Activated CD4-positive, alpha-beta memory T cell treated with anti-CD3 and anti-CD28 coated beads, Interleukin-2, amount 10 ng/mL, durations not matched to agents 7 days and 5 days (primary cell): ENCODE measurements at regions of chr4 and their contacts with region 1.

Region 1: GRCh38 chr4:25312496-25313200 is at the start of gene ZCCHC4:
- DNase-seq: peak; percentile 91
- H3K4me3 Mint-ChIP-seq: peak within 1 kb of the TSS; percentile 99
- H3K27ac Mint-ChIP-seq: peak within 1 kb of the TSS; percentile 88
- H3K4me1 Mint-ChIP-seq: peaks cover 35% of the 10 kb centered on the region
- H3K27me3 Mint-ChIP-seq: peaks cover 2% of the 10 kb centered on the region
- total RNA-seq, gene ZCCHC4: 8.4 TPM

Region 2: DNA sequence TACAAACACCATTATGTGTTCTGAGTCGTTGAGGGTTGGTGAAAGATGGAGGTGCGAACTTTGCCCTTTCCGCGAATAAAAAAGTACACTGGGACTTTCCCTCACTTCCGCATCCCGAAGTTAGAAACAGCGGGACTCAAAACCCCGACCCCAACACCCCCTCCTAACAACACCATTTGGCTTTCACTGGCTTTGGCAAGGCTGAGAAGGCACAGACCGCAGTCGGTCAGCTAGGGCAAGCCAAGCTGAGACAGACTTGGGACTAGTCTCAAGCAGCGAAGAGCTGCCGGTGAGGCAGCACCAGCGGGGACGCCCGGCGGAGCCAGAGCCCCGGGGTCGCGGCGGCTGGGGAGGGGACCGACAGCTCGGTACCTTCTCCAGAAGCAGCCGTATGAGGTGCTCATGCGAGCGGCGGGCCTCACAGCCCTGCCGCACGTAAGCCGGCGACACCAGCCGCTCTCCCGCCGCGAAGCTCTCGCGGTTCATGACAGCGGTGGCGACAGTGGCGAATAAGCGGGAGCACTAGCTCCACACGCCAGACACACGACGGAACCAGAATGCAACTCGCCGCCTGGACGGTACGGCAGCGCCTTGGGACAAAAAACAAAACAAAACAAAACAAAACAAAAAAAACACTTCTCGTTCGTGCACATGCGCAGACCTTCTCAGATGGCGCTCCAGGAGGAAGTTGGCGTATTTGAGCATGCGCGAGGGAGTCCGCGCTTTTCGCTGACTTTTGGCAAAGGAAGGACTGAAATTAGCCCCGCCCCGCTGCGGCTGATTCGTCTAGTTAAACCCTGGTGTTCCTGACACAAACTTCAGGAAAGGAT is 152.5 kb before region 1 on chr4 and contains the start of gene SEPSECS:
- CTCF ChIA-PET with region 1: interaction called, 48 read pairs
- POLR2A ChIA-PET with region 1: interaction called, 44 read pairs
- DNase-seq: peak; percentile 95
- H3K4me3 Mint-ChIP-seq: peak within 1 kb of the TSS; percentile 93
- H3K27ac Mint-ChIP-seq: peak within 1 kb of the TSS; percentile 93
- H3K4me1 Mint-ChIP-seq: peaks cover 45% of the 10 kb centered on the region
- H3K27me3 Mint-ChIP-seq: no peaks in the 10 kb centered on the region
- total RNA-seq, gene SEPSECS: 15.1 to 15.2 TPM

Region 3: DNA sequence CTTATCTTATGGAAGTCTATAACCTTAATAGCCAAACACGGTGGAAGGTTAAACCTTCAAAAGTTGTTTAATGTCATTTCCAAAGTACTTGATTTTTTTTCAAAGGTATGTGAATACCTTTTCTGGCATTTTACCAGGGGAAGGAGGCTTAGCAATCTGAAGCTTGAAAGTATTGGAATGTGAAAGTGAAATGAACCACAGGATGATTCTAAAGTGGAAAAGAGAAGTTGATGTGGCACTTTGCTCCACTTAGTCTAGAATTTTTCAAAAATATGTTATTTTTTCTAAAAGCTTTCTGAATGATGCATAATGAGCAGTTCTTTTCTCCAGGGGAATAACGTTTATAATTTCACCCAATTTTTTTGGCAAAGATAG is 59.6 kb before region 1 on chr4:
- CTCF ChIA-PET with region 1: interaction called, 10 read pairs
- POLR2A ChIA-PET with region 1: interaction called, 3 read pairs
- DNase-seq: no peak
- H3K4me3 Mint-ChIP-seq: no peak overlapping the region
- H3K27ac Mint-ChIP-seq: no peak overlapping the region
- H3K4me1 Mint-ChIP-seq: peaks cover 24% of the 10 kb centered on the region
- H3K27me3 Mint-ChIP-seq: no peaks in the 10 kb centered on the region

Region 4: GRCh38 chr4:25282061-25282460 is 30.6 kb before region 1 on chr4:
- CTCF ChIA-PET with region 1: interaction called, 15 read pairs
- POLR2A ChIA-PET with region 1: interaction called, 5 read pairs
- DNase-seq: no peak
- H3K4me3 Mint-ChIP-seq: no peak overlapping the region
- H3K27ac Mint-ChIP-seq: no peak overlapping the region
- H3K4me1 Mint-ChIP-seq: no peaks in the 10 kb centered on the region
- H3K27me3 Mint-ChIP-seq: peaks cover 5% of the 10 kb centered on the region

Region 5: GRCh38 chr4:25330905-25331808 is 18.5 kb after region 1 on chr4:
- CTCF ChIA-PET with region 1: interaction called, 97 read pairs
- POLR2A ChIA-PET with region 1: interaction called, 50 read pairs
- DNase-seq: peak; percentile 22
- H3K4me3 Mint-ChIP-seq: peak overlapping the region; percentile 84
- H3K27ac Mint-ChIP-seq: peak overlapping the region; percentile 93
- H3K4me1 Mint-ChIP-seq: peaks cover 21% of the 10 kb centered on the region
- H3K27me3 Mint-ChIP-seq: no peaks in the 10 kb centered on the region

Region 6: DNA sequence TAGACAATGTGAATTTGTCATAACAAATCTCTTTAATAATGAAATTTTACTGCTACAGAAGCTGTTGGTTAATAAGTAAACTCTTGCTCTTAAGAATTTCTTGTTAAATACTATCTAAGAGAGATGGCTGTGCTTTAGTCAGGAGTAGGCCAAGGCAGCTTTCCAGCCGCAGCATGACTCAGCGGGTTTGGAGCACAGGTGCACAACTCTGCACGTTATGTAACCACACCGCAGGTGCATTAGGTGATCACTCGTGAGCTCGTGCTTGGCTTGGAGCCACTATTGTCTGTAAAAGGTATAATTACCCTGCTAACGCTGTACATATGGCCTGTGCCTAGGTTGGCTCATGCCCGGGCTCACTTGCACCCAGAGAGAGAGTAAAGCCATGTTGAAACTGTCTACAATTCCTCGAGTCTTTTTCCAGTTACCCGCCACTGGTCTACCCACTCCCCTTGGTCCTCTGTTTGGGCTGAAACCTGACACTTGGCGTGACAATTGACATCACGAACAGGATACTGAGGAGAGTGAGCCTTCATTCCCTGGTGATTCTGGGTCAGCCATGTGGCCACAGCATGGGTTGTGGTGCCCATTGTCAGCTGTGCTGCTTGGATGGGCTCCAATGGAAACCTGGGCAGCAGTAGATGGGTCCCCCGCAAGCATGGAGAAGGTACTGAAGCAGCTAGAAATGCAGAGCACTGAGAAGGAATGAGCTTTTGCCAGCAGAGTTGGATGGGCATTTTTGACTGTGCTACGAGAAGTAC is 46.0 kb after region 1 on chr4:
- CTCF ChIA-PET with region 1: interaction called, 11 read pairs
- POLR2A ChIA-PET with region 1: interaction called, 3 read pairs
- DNase-seq: no peak
- H3K4me3 Mint-ChIP-seq: no peak overlapping the region
- H3K27ac Mint-ChIP-seq: no peak overlapping the region
- H3K4me1 Mint-ChIP-seq: no peaks in the 10 kb centered on the region
- H3K27me3 Mint-ChIP-seq: no peaks in the 10 kb centered on the region

Region 7: GRCh38 chr4:25376754-25377571 is 64.3 kb after region 1 on chr4 and contains the start of gene ANAPC4:
- CTCF ChIA-PET with region 1: interaction called, 75 read pairs
- POLR2A ChIA-PET with region 1: interaction called, 27 read pairs
- DNase-seq: peak; percentile 98
- H3K4me3 Mint-ChIP-seq: no peak within 1 kb of the TSS
- H3K27ac Mint-ChIP-seq: peak within 1 kb of the TSS; percentile 85
- H3K4me1 Mint-ChIP-seq: peaks cover 11% of the 10 kb centered on the region
- H3K27me3 Mint-ChIP-seq: no peaks in the 10 kb centered on the region
- total RNA-seq, gene ANAPC4: 41.0 to 41.2 TPM